ENCODE measurements at regions of chr18 and their contacts with region 1.

Region 1: DNA sequence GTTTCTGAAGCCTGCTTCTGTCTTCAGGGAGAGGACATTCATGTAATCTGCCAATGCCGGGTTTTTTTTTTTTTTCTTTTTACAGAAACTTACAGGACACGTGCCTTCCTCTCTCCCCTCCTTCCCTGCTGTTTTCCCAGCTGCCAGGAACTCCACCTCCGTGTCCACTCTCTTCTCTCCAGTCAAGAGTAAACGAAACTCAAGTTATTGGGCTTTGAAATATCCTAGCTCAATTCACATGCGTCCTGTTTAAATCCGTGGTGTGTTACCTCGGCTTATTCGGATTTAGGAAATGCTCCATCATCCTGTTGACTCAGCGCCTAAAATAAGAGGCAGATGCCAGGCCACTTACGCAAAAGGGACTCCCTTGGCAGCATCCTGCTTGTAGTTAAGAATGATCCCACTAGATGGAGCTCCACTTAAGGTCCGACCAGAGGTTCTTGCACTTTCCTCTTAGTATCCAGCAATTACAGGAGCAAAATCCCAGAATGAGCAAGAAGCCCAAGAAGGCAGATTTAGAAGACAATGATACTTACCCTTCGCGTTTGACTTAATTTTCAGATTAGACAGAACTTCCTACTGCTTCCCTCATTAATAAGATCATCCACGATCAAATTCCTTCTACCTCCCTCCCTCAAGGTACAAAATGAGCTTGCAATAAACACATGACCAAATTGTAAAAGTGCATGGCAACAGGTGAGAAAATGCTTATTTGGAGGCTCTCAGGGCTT is 97.2 kb upstream of the ZCCHC2 start:
- DNase-seq: peak; percentile 56
- H3K4me3 Mint-ChIP-seq: peak overlapping the region; percentile 19
- H3K27ac Mint-ChIP-seq: peak overlapping the region; percentile 69
- H3K4me1 Mint-ChIP-seq: peaks cover 44% of the 10 kb centered on the region
- H3K27me3 Mint-ChIP-seq: no peaks in the 10 kb centered on the region

Region 2: DNA sequence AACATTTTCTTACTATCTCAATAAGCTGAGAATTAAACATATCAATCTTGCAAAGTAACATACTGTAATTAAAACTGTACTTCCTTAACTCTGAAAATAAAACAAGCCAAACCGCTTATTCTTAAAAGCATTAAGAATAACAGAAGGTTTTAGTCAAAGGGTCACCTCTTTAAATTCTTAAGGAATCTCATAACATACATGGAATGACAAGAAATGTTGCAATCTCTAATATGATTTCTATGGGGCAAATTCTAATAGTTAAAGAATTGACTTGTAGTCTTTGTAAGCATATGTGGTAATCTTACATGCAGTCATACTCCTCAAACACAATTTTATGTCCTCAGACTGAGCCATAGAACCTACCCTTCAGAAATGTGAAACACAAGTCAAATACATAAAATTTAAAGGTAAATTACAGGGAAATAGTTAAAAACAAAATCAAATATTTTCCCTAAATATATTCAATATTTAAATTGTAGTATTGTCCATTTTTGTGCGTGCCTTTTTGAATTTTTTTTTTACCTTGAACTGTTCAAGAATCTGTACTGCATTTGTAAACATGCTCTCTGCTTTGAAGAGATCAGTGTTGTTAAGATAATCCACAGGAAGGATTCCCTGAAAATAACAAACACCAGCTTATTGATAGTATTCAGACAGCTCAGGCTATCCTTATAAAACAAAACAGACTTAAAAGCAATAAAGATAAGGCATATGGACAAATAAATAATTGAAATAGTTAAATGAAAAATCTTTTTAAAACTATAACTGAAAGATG is 287.0 kb before region 1 on chr18:
- intact Hi-C with region 1: no loop called
- DNase-seq: no peak
- H3K4me3 Mint-ChIP-seq: no peak overlapping the region
- H3K27ac Mint-ChIP-seq: no peak overlapping the region
- H3K4me1 Mint-ChIP-seq: no peaks in the 10 kb centered on the region
- H3K27me3 Mint-ChIP-seq: no peaks in the 10 kb centered on the region

Region 3: DNA sequence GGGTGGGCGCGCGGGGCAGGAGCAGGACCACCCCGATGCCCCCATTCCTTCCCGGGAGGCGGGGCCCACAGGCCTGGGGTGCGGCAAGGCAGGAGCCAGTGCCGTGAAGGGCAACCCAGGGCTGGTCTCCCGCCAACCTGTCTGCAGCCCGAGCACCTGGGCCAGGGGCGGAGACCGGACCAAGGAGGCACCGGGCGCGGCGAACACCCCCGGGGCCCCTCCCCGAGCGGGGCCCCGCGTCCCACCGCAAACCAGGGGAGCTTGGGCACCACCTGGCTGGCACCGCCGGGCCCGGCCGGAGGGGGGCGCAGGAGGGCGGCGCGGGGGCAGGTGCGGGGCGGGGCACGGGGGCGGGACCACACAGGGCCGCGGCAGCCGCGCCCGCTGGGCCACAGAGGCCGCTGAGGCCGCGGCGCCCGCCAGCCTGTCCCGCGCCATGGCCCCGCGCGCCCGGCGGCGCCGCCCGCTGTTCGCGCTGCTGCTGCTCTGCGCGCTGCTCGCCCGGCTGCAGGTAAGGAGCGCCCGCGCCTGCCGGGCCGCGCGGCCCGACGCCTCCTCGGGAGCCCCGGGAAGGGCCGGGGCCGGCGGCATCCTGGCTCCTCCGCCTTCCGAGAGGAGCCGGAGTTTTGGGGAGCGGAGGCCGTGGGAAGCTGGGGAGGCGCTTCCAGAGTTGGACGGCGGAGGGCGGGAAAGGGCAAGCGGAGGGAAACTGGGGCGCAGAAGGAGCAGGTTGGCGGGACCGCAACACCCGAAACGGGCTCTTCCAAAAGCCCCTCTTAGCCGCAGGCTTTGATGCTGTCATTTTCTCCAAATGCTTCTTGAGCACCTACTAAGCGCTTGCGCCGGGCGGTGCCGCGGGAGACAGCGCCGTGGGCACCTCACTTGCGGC is 100.5 kb before region 1 on chr18 and contains the start of gene TNFRSF11A:
- intact Hi-C with region 1: loop called (anchors 1 kb)
- DNase-seq: peak; percentile 62
- H3K4me3 Mint-ChIP-seq: peak within 1 kb of the TSS; percentile 97
- H3K27ac Mint-ChIP-seq: peak within 1 kb of the TSS; percentile 87
- H3K4me1 Mint-ChIP-seq: peaks cover 62% of the 10 kb centered on the region
- H3K27me3 Mint-ChIP-seq: peaks cover 34% of the 10 kb centered on the region
- total RNA-seq, gene TNFRSF11A: 22.9 and 27.1 TPM in 2 replicates

Region 4: DNA sequence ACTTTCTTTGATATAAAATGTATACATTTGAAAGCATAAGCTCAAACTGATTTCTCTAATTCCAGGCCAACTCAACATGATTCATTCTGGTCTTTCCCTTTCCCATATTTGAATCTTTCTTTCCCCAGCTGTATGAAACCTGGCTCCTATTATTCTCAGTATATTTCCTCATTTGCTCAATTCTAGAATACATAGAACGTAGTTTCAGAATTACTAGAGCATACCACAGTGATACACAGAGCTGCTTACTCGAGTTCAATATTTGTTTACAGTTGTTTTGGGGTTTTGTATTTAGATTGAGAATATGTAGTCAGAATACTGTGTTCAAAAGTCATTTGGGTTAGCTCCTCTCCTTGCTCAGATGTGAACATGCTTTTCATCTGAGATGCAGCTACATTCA is 57.5 kb before region 1 on chr18:
- intact Hi-C with region 1: loop called (anchors 1 kb)
- DNase-seq: no peak
- H3K4me3 Mint-ChIP-seq: peak overlapping the region; percentile 23
- H3K27ac Mint-ChIP-seq: peak overlapping the region; percentile 85
- H3K4me1 Mint-ChIP-seq: peaks cover 73% of the 10 kb centered on the region
- H3K27me3 Mint-ChIP-seq: no peaks in the 10 kb centered on the region

Region 5: GRCh38 chr18:62452280-62452831 is 26.7 kb after region 1 on chr18:
- intact Hi-C with region 1: loop called (anchors 2 kb)
- DNase-seq: no peak
- H3K4me3 Mint-ChIP-seq: peak overlapping the region; percentile 28
- H3K27ac Mint-ChIP-seq: peak overlapping the region; percentile 63
- H3K4me1 Mint-ChIP-seq: peaks cover 31% of the 10 kb centered on the region
- H3K27me3 Mint-ChIP-seq: peaks cover 4% of the 10 kb centered on the region

Region 6: GRCh38 chr18:62464266-62464665 is 38.6 kb after region 1 on chr18:
- intact Hi-C with region 1: no loop called
- DNase-seq: no peak
- H3K4me3 Mint-ChIP-seq: no peak overlapping the region
- H3K27ac Mint-ChIP-seq: no peak overlapping the region
- H3K4me1 Mint-ChIP-seq: no peaks in the 10 kb centered on the region
- H3K27me3 Mint-ChIP-seq: peaks cover 7% of the 10 kb centered on the region

Region 7: GRCh38 chr18:62555135-62555534 is 129.5 kb after region 1 on chr18:
- intact Hi-C with region 1: loop called (anchors 1 kb)
- DNase-seq: no peak
- H3K4me3 Mint-ChIP-seq: no peak overlapping the region
- H3K27ac Mint-ChIP-seq: no peak overlapping the region
- H3K4me1 Mint-ChIP-seq: peaks cover 26% of the 10 kb centered on the region
- H3K27me3 Mint-ChIP-seq: no peaks in the 10 kb centered on the region